Activated CD4-positive, alpha-beta memory T cell treated with anti-CD3 and anti-CD28 coated beads for 36 hours (primary cell): ENCODE measurements at regions of chr15 and their contacts with region 1.

Region 1: DNA sequence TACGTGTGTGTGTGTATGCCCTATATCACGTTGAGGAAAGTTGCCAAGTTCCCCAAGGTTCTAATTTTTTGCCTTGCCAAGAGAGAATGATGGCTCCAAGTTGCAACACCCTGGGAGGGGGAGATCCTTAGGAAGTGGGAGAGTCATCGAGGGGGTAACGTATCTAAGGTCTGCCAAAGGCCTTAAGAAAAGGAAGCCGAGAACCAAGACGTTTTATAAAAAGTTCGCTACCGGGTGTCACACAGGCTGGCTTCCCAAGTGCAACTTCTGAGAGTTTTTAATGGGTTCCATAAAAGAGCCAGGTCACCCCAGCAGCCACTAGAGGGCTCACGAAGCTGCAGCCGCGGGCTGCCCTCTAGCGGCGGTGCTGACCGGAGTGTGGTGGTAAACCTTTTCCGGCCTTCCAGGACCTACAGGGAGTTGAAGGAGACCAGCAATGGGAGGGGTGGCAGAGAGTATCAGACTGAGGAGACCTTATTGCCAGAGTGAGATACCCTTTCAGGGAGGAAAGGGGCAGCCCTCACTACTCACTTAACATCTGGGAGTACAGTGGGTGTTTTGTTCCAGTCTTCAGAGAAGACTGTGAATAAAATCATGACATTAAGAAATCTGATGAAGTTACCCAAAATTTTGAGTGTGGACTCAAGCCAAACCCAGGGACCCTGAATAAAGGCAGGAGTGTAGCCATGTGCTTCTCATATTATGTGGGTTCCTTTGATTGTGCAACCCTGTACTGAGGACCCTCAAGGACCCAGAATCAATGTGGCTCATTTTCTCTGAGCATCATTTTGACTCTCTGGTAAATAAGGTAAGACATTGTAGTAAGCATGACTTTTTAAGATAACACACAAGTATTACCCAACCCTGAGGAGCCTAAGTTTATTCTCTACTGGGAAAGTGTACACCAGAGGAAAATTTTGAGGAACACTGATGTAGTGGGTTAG is 2.5 kb upstream of the RFX7 start:
- DNase-seq: peak; percentile 93
- H3K4me3 Mint-ChIP-seq: peak overlapping the region; percentile 91
- H3K27ac Mint-ChIP-seq: peak overlapping the region; percentile 93
- H3K4me1 Mint-ChIP-seq: peaks cover 21% of the 10 kb centered on the region
- H3K27me3 Mint-ChIP-seq: peaks cover 3% of the 10 kb centered on the region

Region 2: DNA sequence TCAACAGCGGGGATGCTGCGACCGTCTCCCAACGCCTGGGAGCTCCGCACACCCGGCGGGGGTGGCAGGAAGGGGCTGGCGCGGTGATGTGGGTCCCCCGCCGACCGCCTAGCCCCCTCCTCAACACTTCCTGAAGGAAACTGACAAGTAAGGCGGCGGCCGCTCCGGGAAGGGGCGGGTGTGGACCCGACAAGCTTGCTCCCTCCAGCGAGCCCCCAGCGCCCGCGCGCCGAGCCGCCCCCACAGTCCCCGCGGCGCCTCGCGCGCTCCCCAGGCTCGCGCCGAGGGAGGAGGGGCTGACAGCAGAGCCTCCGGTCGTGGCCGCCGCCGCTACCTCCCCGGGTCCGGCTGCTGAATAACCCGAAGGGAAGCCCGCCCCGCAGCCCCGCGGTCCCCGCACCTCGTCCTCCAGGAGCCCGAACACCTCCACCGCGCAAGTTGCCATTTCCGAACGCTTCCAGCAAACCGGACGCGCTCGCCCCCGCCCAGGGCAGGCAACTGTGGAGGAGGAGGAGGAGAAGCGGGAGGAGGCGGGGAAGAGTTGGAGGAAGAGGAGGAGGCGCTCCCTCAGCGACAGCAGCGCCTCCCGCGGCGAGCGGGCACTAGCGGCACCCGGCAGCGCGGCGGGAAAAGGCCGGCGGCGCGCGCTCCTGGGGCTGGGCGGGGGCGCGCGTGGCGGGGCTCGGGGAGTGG is 252.9 kb before region 1 on chr15 and contains the start of gene NEDD4:
- CTCF ChIA-PET with region 1: interaction called, 5 read pairs
- POLR2A ChIA-PET with region 1: no interaction called
- intact Hi-C with region 1: loop called (anchors 1 kb)
- DNase-seq: peak; percentile 81
- H3K4me3 Mint-ChIP-seq: peak within 1 kb of the TSS; percentile 81
- H3K27ac Mint-ChIP-seq: peak within 1 kb of the TSS; percentile 61
- H3K4me1 Mint-ChIP-seq: peaks cover 23% of the 10 kb centered on the region
- H3K27me3 Mint-ChIP-seq: peaks cover 11% of the 10 kb centered on the region
- total RNA-seq, gene NEDD4: 18.5 to 18.7 TPM

Region 3: DNA sequence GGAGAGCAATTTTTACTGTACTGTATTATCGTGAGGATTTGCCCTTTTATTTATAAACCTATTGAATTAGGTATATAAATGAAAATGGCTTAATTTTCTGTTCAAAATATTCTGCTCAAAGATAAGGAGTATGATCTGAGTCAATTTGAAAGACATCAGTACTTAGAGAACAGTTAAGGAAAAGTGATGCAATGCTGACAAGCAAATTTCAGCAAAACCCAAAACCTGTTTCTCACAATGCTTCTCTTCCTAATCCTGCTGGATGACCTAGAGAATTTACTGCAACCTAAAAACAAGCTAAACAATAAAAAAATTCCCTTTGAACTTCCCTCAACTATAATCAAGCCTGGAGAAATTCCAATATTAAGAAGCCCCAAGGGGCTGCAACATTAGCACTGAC is 85.2 kb before region 1 on chr15:
- CTCF ChIA-PET with region 1: interaction called, 7 read pairs
- POLR2A ChIA-PET with region 1: no interaction called
- intact Hi-C with region 1: loop called (anchors 5 kb)
- DNase-seq: no peak
- H3K4me3 Mint-ChIP-seq: no peak overlapping the region
- H3K27ac Mint-ChIP-seq: no peak overlapping the region
- H3K4me1 Mint-ChIP-seq: peaks cover 32% of the 10 kb centered on the region
- H3K27me3 Mint-ChIP-seq: no peaks in the 10 kb centered on the region

Region 4: GRCh38 chr15:56295433-56295832 is 49.3 kb after region 1 on chr15:
- CTCF ChIA-PET with region 1: no interaction called
- POLR2A ChIA-PET with region 1: no interaction called
- intact Hi-C with region 1: no loop called
- DNase-seq: no peak
- H3K4me3 Mint-ChIP-seq: no peak overlapping the region
- H3K27ac Mint-ChIP-seq: no peak overlapping the region
- H3K4me1 Mint-ChIP-seq: no peaks in the 10 kb centered on the region
- H3K27me3 Mint-ChIP-seq: no peaks in the 10 kb centered on the region

Region 5: GRCh38 chr15:56365075-56365711 is 119.0 kb after region 1 on chr15 and contains the start of gene TEX9:
- CTCF ChIA-PET with region 1: no interaction called
- POLR2A ChIA-PET with region 1: no interaction called
- intact Hi-C with region 1: loop called (anchors 2 kb)
- DNase-seq: peak; percentile 87
- H3K4me3 Mint-ChIP-seq: peak within 1 kb of the TSS; percentile 79
- H3K27ac Mint-ChIP-seq: no peak within 1 kb of the TSS
- H3K4me1 Mint-ChIP-seq: peaks cover 16% of the 10 kb centered on the region
- H3K27me3 Mint-ChIP-seq: peaks cover 21% of the 10 kb centered on the region
- total RNA-seq, gene TEX9: 1.3 to 1.6 TPM

Region 6: DNA sequence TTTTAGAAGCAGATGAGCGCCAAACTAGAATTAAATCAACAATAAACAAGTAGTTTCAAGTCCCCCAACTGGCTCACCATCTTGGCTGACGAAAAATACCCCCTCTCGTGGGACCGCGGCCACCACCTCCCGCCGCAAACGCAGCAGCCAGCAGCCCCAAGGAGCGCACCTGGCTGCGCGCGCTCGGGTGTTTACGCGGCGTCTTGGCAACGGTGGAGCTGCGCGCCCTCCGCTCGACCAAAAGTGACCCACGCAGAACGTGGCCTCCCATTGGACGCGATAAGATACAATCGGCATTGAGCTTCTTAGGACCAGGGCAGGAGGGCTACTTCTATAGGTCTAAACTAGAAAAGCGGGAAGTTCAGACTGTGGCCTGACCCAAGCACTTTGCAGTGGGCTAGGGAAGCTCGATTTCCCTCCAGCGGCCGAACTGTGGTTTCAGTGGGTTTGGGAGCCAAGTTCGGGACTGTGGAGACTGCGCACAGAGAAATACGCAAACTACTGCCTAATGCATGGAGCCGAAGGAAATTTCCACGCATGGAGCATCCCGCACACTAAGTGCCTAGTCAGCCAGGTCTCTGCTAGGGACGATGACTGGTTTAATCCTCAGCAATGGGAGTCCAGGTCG is 218.9 kb after region 1 on chr15 and contains the start of gene MNS1:
- CTCF ChIA-PET with region 1: interaction called, 3 read pairs
- POLR2A ChIA-PET with region 1: interaction called, 7 read pairs
- intact Hi-C with region 1: loop called (anchors 5 kb)
- DNase-seq: peak; percentile 87
- H3K4me3 Mint-ChIP-seq: peak within 1 kb of the TSS; percentile 83
- H3K27ac Mint-ChIP-seq: no peak within 1 kb of the TSS
- H3K4me1 Mint-ChIP-seq: peaks cover 25% of the 10 kb centered on the region
- H3K27me3 Mint-ChIP-seq: peaks cover 29% of the 10 kb centered on the region
- total RNA-seq, gene MNS1: 0.10 to 0.36 TPM

Region 7: GRCh38 chr15:57152666-57153539 is 906.8 kb after region 1 on chr15:
- CTCF ChIA-PET with region 1: no interaction called
- POLR2A ChIA-PET with region 1: no interaction called
- intact Hi-C with region 1: loop called (anchors 5 kb)
- DNase-seq: peak; percentile 29
- H3K4me3 Mint-ChIP-seq: no peak overlapping the region
- H3K27ac Mint-ChIP-seq: peak overlapping the region; percentile 16
- H3K4me1 Mint-ChIP-seq: peaks cover 21% of the 10 kb centered on the region
- H3K27me3 Mint-ChIP-seq: no peaks in the 10 kb centered on the region

Region 8: GRCh38 chr15:57706405-57707209 is 1460.5 kb after region 1 on chr15 and contains the start of gene POLR2M:
- CTCF ChIA-PET with region 1: no interaction called
- POLR2A ChIA-PET with region 1: no interaction called
- intact Hi-C with region 1: loop called (anchors 5 kb)
- DNase-seq: peak; percentile 96
- H3K4me3 Mint-ChIP-seq: peak within 1 kb of the TSS; percentile 84
- H3K27ac Mint-ChIP-seq: peak within 1 kb of the TSS; percentile 88
- H3K4me1 Mint-ChIP-seq: peaks cover 71% of the 10 kb centered on the region
- H3K27me3 Mint-ChIP-seq: no peaks in the 10 kb centered on the region
- total RNA-seq, gene POLR2M: 84.1 to 86.5 TPM